ENCODE measurements at regions of chr2 and their contacts with region 1.

Region 1: DNA sequence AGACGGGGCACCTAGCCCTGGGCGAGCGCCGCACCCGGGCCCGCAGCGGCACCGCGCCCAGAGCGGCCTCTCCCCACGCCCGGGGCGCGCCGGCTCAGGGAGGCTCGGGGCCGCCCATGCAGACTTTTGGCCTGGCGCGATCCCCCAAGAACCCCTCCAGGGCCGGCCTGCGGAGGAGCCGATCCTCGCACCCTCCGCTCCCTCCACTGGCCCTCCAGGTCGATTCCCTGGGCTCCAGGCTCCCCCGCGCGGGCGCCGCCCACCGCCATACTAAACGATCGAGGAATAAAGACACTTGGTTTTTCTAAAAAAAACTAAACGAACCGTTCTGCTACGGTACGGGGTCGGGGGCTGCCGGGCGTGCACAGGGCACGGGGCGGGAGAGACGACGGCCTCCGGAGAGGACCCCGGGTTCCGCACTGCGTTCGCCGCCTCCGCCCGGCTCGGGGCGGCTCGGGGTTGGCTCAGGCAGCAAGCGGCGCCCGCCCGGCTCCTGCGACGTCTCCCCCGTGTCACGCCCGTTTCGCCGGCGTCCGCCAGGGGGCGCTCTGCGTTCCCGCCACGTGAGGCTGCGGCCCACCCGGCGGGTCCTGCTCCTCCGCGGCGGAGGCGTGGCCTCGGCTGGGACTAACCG is 365 bp upstream of the KHK start:
- DNase-seq: no peak
- H3K4me3 ChIP-seq: peak overlapping the region; percentile 58 to 68
- H3K27ac ChIP-seq: peak overlapping the region; percentile 83
- H3K4me1 ChIP-seq: peaks cover 48% of the 10 kb centered on the region
- H3K27me3 ChIP-seq: no peaks in the 10 kb centered on the region
- CTCF ChIP-seq: peak; percentile 86 to 93 (median 89)
- POLR2A ChIP-seq: peak in 1 of 2 donors; percentile 50

Region 2: DNA sequence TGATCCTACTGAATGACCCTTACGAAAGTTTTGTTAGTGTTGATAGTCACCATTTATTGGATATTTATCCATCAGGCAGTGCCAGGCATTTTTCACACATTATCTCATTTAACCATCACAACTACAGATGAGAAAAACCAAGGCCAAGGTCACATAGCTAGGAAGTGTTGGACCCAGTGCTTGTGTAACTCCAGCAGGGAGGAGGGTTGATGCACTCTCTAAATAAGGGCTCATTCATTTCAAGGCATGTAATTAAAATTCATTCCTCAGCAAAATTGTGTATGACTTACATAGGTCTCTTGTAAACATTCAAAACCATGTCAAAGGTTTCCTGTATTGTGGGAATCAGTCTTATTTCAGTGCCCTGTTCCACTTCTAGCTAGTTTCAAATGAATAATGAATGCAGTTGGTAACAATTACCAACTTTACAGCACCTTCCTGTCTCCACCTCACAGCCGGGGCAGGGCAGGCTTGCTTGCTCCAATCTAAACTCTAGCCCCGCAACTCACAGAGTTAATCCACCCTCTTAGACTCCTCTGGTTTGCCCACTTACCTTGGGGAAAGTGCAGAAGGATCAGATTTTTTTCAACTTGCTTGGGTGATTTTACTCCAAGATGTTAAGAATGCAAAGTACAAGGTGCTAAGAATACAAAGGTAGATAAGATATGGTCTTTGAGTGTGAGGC is 121.6 kb before region 1 on chr2:
- intact Hi-C with region 1: loop called (anchors 5 kb)
- DNase-seq: no peak
- H3K4me3 ChIP-seq: no peak overlapping the region
- H3K27ac ChIP-seq: no peak overlapping the region
- H3K4me1 ChIP-seq: no peaks in the 10 kb centered on the region
- H3K27me3 ChIP-seq: no peaks in the 10 kb centered on the region
- CTCF ChIP-seq: no peak
- POLR2A ChIP-seq: no peak

Region 3: GRCh38 chr2:27032495-27033252 is 53.5 kb before region 1 on chr2 and contains the start of gene TMEM214:
- intact Hi-C with region 1: loop called (anchors 10 kb)
- DNase-seq: no peak
- H3K4me3 ChIP-seq: peak within 1 kb of the TSS; percentile 81 to 85
- H3K27ac ChIP-seq: peak within 1 kb of the TSS; percentile 79
- H3K4me1 ChIP-seq: peaks cover 28% of the 10 kb centered on the region
- H3K27me3 ChIP-seq: no peaks in the 10 kb centered on the region
- CTCF ChIP-seq: no peak
- POLR2A ChIP-seq: peak in 1 of 2 donors; percentile 53
- total RNA-seq, gene TMEM214: 53.3 TPM

Region 4: GRCh38 chr2:27050281-27050995 is 35.8 kb before region 1 on chr2:
- intact Hi-C with region 1: loop called (anchors 2 kb)
- DNase-seq: peak in 1 of 2 donors; percentile 98
- H3K4me3 ChIP-seq: peak overlapping the region; percentile 71 to 93
- H3K27ac ChIP-seq: peak overlapping the region; percentile 95
- H3K4me1 ChIP-seq: peaks cover 22% of the 10 kb centered on the region
- H3K27me3 ChIP-seq: no peaks in the 10 kb centered on the region
- CTCF ChIP-seq: peak in 1 of 3 experiments; percentile 61
- POLR2A ChIP-seq: no peak

Region 5: GRCh38 chr2:27920148-27920885 is 834.1 kb after region 1 on chr2:
- intact Hi-C with region 1: no loop called
- DNase-seq: no peak
- H3K4me3 ChIP-seq: no peak overlapping the region
- H3K27ac ChIP-seq: peak overlapping the region; percentile 59
- H3K4me1 ChIP-seq: peaks cover 22% of the 10 kb centered on the region
- H3K27me3 ChIP-seq: no peaks in the 10 kb centered on the region
- CTCF ChIP-seq: no peak
- POLR2A ChIP-seq: no peak

Measured in vagina (tissue), 2 donors.